Calu3 (cell line): ENCODE measurements at regions of chr10 and their contacts with region 1.

Region 1: GRCh38 chr10:76547352-76547972 is 1090.1 kb downstream of the KCNMA1 start:
- DNase-seq: peak; percentile 85
- H3K4me3 Mint-ChIP-seq: no peak overlapping the region
- H3K27ac Mint-ChIP-seq: no peak overlapping the region
- H3K4me1 Mint-ChIP-seq: no peaks in the 10 kb centered on the region
- H3K27me3 Mint-ChIP-seq: peaks cover 8% of the 10 kb centered on the region
- CTCF ChIP-seq: peak; percentile 73

Region 2: GRCh38 chr10:77111611-77112550 is 564.4 kb after region 1 on chr10:
- CTCF ChIA-PET with region 1: no interaction called
- intact Hi-C with region 1: loop called (anchors 10 kb)
- DNase-seq: peak; percentile 44
- H3K4me3 Mint-ChIP-seq: no peak overlapping the region
- H3K27ac Mint-ChIP-seq: no peak overlapping the region
- H3K4me1 Mint-ChIP-seq: peaks cover 6% of the 10 kb centered on the region
- H3K27me3 Mint-ChIP-seq: peaks cover 45% of the 10 kb centered on the region
- CTCF ChIP-seq: peak; percentile 80